ENCODE measurements at regions of chr6 and their contacts with region 1.

Region 1: DNA sequence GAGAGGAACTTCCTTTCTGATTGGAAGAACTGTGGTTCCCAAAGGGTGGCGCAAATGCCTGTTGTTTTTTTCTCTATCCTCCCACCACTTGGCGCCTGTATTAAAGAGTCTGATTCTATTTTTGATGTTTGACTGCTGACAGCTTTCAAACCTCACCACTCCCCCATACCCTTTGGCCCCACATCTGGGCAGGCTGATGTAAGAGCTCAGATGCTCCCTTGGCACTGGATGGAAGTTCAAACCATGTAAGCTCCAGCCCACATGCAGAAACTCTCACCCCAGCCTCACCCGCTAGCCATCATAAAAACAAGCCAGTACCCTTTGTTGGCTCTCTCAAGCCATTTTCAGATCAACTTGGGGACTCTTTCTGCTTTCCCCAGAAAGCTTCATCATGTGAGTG is 20.0 kb upstream of the TMEM14A start:
- DNase-seq: no peak

Region 2: GRCh38 chr6:52640170-52640569 is 10.8 kb before region 1 on chr6:
- CTCF ChIA-PET with region 1: interaction called, 23 read pairs
- POLR2A ChIA-PET with region 1: interaction called, 3 read pairs
- DNase-seq: no peak

Region 3: GRCh38 chr6:52664186-52664990 is 13.4 kb after region 1 on chr6:
- CTCF ChIA-PET with region 1: interaction called, 46 read pairs
- POLR2A ChIA-PET with region 1: interaction called, 3 read pairs
- DNase-seq: peak; percentile 92

Measured in HEK293T (cell line).